Colonic mucosa (tissue), 4 donors: ENCODE measurements at regions of chr15 and their contacts with region 1.

Region 1: GRCh38 chr15:84929744-84930371 is 45.4 kb downstream of the SLC28A1 start:
- DNase-seq: peak; percentile 78
- H3K4me3 ChIP-seq: no peak overlapping the region
- H3K27ac ChIP-seq: no peak overlapping the region
- H3K4me1 ChIP-seq: no peaks in the 10 kb centered on the region
- H3K27me3 ChIP-seq: no peaks in the 10 kb centered on the region
- CTCF ChIP-seq: no peak

Region 2: GRCh38 chr15:84588053-84588874 is 341.6 kb before region 1 on chr15:
- intact Hi-C with region 1: loop called (anchors 5 kb)
- DNase-seq: peak; percentile 89
- H3K4me3 ChIP-seq: peak overlapping the region; percentile 2
- H3K27ac ChIP-seq: no peak overlapping the region
- H3K4me1 ChIP-seq: no peaks in the 10 kb centered on the region
- H3K27me3 ChIP-seq: no peaks in the 10 kb centered on the region
- CTCF ChIP-seq: peak; percentile 86

Region 3: DNA sequence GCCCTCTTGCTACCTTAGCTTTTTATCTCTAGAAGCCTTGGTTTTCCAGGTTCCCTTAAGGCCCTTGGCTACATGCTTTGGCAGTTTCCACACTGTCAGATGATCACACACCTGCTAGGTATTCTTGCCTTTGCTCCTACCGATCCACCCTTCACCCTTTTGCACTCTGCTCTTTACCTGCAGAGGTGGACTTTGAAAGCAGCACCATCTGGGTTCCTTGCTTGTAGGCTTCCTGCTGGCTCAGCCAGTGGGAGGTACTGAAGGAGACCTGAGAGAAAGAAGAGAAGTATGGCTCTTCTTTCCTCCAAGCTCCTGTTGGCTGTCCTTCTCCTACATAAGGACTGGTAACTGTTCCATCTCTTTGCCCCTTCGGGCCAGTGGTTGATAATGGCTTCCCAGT is 188.7 kb before region 1 on chr15:
- intact Hi-C with region 1: no loop called
- DNase-seq: peak; percentile 83
- H3K4me3 ChIP-seq: no peak overlapping the region
- H3K27ac ChIP-seq: peak overlapping the region; percentile 50
- H3K4me1 ChIP-seq: peaks cover 5% of the 10 kb centered on the region
- H3K27me3 ChIP-seq: no peaks in the 10 kb centered on the region
- CTCF ChIP-seq: no peak

Region 4: DNA sequence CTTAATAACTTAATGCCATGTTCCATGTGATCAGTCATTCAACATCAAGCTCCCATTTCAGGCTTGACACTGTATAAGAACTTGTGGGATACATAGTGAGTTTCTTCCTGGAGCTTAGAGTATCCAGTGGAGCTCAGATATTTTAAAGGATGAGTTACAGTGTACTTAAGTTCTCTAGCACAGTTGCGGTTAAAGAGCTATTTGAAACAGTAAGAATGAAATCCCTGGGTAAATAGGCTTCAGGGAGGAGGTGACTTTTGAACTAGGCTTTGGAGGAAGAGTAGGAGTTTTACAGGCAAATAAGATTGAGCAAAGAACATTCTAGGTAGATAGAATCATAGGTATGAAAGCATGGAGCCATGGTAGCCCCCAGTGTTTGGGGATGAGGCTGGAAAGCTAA is 177.7 kb before region 1 on chr15:
- intact Hi-C with region 1: no loop called
- DNase-seq: no peak
- H3K4me3 ChIP-seq: no peak overlapping the region
- H3K27ac ChIP-seq: no peak overlapping the region
- H3K4me1 ChIP-seq: peaks cover 30% of the 10 kb centered on the region
- H3K27me3 ChIP-seq: no peaks in the 10 kb centered on the region
- CTCF ChIP-seq: no peak

Region 5: DNA sequence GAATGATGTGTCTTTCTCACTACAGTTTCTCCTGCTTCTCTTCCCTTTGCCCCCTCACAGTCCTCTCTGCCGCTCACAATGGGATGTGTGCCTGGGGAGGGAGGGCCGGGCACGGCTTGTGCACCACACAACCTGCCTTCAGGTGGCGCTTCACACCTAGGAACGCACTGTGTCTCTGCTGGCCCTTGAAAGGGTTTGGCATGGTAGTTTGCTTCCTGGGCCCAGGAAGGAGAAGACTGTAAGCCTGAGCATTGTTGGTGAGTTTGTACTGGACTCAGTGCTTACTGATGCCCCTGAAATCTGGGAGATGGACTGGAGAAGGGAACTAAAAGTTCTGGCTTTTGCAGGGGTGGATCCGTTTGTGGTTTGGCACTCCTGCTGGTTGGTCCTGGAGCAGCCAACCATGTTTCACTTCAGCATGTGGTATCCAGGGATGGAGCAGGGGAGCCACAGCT is 103.5 kb before region 1 on chr15:
- intact Hi-C with region 1: loop called (anchors 5 kb)
- DNase-seq: peak; percentile 46
- H3K4me3 ChIP-seq: no peak overlapping the region
- H3K27ac ChIP-seq: no peak overlapping the region
- H3K4me1 ChIP-seq: no peaks in the 10 kb centered on the region
- H3K27me3 ChIP-seq: no peaks in the 10 kb centered on the region
- CTCF ChIP-seq: peak; percentile 48

Region 6: GRCh38 chr15:84844964-84845363 is 84.9 kb before region 1 on chr15:
- intact Hi-C with region 1: loop called (anchors 5 kb)
- DNase-seq: no peak
- H3K4me3 ChIP-seq: no peak overlapping the region
- H3K27ac ChIP-seq: no peak overlapping the region
- H3K4me1 ChIP-seq: peaks cover 5% of the 10 kb centered on the region
- H3K27me3 ChIP-seq: no peaks in the 10 kb centered on the region
- CTCF ChIP-seq: no peak